ENCODE measurements at regions of chr22 and their contacts with region 1.

Region 1: DNA sequence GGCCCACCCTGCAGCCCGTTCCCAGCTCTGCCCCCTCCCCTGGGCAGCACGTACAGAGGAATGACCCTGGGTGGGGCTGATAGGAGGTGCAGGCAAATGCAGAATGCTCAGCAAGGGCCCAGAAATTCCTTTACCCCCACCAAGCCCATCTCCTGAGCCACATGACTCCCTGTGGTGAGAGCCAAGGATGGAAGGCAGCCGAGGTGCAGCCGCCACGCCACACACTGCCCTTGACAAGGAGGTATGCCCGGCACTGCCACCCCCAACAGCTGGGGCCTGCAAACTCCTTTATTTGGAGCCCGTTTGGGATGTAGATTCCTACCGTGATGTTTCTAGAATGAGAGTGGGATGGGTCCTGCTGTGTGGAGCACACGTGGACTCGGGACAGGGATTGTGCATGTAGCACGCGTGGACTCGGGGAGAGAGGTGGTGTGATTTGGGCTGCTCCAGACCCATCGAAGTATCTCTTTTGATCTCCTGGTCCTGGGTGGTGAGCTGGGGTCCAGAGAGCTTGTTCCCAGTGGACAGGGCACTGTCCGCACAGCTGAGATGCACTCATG is 12.9 kb downstream of the GTSE1 start:
- DNase-seq: no peak
- H3K4me3 ChIP-seq: no peak overlapping the region
- H3K27ac ChIP-seq: no peak overlapping the region
- H3K4me1 ChIP-seq: no peaks in the 10 kb centered on the region
- H3K27me3 ChIP-seq: no peaks in the 10 kb centered on the region
- CTCF ChIP-seq: no peak
- POLR2A ChIP-seq: no peak

Region 2: GRCh38 chr22:45994491-45995404 is 314.9 kb before region 1 on chr22:
- intact Hi-C with region 1: loop called (anchors 5 to 10 kb)
- DNase-seq: peak; percentile 84 to 94 (median 88)
- H3K4me3 ChIP-seq: no peak overlapping the region
- H3K27ac ChIP-seq: no peak overlapping the region
- H3K4me1 ChIP-seq: peaks cover 36 to 49% of the 10 kb centered on the region in 2 donors
- H3K27me3 ChIP-seq: no peaks in the 10 kb centered on the region
- CTCF ChIP-seq: peak; percentile 96 to 99 (median 98)
- POLR2A ChIP-seq: no peak

Region 3: DNA sequence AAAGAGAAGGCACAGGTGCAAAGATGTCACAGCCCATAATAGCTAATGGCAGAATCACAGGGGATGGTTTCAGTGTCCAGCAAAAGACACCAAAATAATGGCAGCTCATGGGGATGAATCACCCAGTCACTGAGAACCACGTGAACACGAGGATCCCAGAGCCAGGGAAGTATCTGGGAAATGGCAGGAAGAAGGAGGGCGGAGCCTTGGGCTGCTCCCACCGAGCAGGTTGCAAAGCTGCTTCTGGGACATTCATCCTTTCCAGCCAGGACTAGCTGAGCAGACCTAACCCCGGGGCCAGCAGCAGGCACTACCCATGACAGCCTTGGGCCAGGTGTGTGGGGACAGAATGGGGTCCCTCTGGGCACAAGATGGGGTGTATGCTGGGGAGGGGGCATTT is 71.6 kb after region 1 on chr22:
- intact Hi-C with region 1: no loop called
- DNase-seq: peak in 6 of 7 donors; percentile 36 to 72 (median 56)
- H3K4me3 ChIP-seq: no peak overlapping the region
- H3K27ac ChIP-seq: no peak overlapping the region
- H3K4me1 ChIP-seq: peaks cover 6 to 13% of the 10 kb centered on the region in 2 donors
- H3K27me3 ChIP-seq: no peaks in the 10 kb centered on the region
- CTCF ChIP-seq: no peak
- POLR2A ChIP-seq: no peak

Measured in adrenal gland (tissue), 19 donors.